A549 (cell line): ENCODE measurements at regions of chr3 and their contacts with region 1.

Region 1: GRCh38 chr3:184017672-184018423 is at the start of gene ABCC5:
- DNase-seq: peak; percentile 86
- ATAC-seq: peak; percentile 98 to 99
- H3K4me3 ChIP-seq: peak within 1 kb of the TSS; percentile 93
- H3K27ac ChIP-seq: peak within 1 kb of the TSS; percentile 89 to 98
- H3K4me1 ChIP-seq: peaks cover 9% of the 10 kb centered on the region; the same call in 2 of the 3 replicates
- CTCF ChIP-seq: peak; percentile 23; the same call in 1 of the 3 replicates
- EP300 ChIP-seq: no peak
- POLR2A ChIP-seq: peak; percentile 76
- RAD21 ChIP-seq: 0 out of 5 replicates have a peak, but pooled peaks of 1 of the 2 experiments have one; percentile 7
- polyA plus RNA-seq, gene ABCC5: 19.1 and 20.7 TPM in 2 replicates

Region 2: DNA sequence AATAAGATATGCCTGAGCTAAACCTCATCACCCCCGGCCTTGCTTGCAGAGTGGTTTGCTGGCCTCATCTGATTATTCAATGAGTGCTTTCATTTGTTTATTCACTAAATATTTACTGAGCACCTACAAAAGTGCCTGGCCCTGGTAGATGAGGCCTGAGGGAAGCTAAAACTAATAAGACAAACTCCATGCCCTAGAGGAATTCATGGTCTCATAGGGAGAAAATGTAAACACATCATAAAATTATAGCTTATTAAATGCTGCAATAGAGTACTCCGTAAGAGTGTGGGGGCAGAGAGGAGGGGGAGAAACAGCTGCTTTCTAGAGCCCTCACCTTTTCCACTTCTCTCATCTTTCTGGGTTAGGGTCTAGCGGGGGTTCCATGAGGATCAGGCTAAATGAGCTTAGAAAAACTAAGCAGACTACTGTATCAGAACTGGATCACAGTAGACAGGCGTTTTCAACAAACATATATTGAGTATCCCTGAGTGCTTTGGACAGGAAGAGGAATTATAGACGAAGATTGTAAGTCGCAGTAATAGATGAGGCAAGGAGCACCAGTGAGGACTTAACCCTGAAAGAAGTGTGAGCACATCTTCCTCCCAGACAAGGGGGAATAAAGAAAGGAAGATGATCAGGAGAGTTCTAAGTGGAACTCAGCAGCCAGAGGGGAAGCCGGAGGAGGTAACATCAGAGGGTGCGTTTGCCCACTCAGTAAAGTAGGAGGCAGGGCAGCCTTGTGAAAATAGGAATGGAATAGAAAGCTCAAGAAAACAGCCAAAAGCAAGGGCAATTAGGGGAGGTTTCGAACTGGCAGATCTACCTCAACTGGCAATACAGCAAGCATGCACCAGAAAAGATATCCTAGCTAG is 823.8 kb before region 1 on chr3:
- CTCF ChIA-PET with region 1: no interaction called
- POLR2A ChIA-PET with region 1: no interaction called
- DNase-seq: no peak
- ATAC-seq: no peak
- H3K4me3 ChIP-seq: no peak overlapping the region
- H3K27ac ChIP-seq: no peak overlapping the region
- H3K4me1 ChIP-seq: no peaks in the 10 kb centered on the region
- CTCF ChIP-seq: no peak
- EP300 ChIP-seq: no peak
- POLR2A ChIP-seq: no peak
- RAD21 ChIP-seq: no peak

Region 3: DNA sequence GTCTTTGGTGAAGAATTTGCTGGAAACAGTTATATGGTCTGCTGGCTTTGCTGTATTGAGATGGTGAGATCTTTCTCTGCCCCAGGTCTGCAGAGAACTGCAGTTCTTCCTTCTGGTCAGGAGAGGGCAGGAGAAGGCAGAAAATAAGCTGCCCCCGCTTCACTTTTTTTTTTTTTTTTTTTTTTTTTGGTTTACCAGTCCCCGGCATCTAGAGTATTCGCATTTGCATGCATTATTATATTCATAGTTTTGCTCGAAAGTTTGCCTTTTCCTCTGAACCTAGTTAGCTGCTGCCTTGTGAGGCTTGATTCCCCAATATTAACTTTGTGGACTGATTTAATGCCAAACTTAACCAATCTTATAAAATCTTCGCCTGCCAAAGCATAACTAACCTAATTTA is 122.6 kb before region 1 on chr3:
- CTCF ChIA-PET with region 1: interaction called, 37 read pairs
- POLR2A ChIA-PET with region 1: no interaction called
- DNase-seq: peak; percentile 46 to 65
- ATAC-seq: peak; percentile 71 to 85; a peak in 5 of 6 replicates
- H3K4me3 ChIP-seq: no peak overlapping the region
- H3K27ac ChIP-seq: no peak overlapping the region
- H3K4me1 ChIP-seq: no peaks in the 10 kb centered on the region
- CTCF ChIP-seq: peak; percentile 68
- EP300 ChIP-seq: no peak
- POLR2A ChIP-seq: no peak
- RAD21 ChIP-seq: peak; percentile 80 to 83

Region 4: DNA sequence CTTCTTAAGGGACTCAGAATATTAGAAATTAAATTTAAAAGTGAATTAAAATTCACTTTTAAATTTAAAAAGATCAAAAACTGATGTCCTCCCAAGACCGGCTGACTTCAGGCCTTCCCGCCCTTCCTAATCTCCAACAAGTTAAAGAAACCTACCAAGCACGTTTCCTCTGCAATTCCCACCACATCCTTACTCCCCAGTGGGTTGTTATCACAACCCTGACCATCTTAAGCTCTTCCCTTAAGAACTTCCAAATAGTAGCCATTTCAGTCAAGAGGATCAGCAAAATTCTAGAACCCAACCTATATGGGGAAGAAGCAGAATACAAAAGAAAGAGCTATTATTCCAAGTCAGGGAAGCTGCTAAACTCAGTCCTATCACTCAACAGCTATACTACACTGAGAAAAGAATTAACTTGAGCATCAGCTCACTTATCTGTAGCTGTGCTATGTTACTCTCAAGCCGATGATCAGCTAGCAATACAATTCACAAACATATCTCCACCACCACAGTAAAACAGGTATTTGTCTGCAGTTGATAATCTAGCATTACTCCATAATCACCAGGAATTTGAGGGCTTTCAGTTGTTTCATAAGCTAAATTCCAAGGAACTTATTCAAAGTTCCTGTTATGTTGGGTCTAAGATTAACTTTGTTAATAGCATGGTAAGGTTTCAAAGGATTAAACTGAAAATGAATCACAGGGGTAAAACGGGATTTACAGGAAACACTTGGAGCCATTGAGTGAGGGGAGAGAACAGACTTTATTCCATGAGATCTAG is 14.5 kb before region 1 on chr3:
- CTCF ChIA-PET with region 1: interaction called, 10 read pairs
- POLR2A ChIA-PET with region 1: no interaction called
- DNase-seq: no peak
- ATAC-seq: no peak
- H3K4me3 ChIP-seq: no peak overlapping the region
- H3K27ac ChIP-seq: no peak overlapping the region
- H3K4me1 ChIP-seq: peaks cover 11% of the 10 kb centered on the region
- CTCF ChIP-seq: no peak
- EP300 ChIP-seq: no peak
- POLR2A ChIP-seq: no peak
- RAD21 ChIP-seq: no peak